HepG2 (cell line): ENCODE measurements at regions of chr9 and their contacts with region 1.

Region 1: DNA sequence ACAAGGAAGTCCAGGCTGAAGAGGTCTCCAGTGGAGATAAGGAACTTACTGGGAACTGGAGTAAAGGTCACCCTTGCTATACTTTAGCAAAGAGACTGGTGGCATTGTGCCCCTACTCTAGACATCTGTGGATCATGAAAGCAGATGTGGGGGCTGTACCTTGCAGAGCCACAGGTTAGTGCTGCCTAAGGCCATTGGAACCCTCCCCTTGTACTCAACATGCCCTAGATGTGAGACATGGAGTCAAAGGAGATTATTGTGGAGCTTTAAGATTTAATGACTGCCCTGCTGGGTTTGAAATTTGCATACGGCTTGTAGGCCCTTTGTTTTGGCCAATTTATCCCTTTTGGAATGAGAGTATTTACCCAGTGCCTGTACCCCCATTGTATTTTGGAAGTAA is 397.3 kb upstream of the GRIN3A start:
- DNase-seq: no peak
- ATAC-seq: no peak
- H3K4me3 ChIP-seq: no peak overlapping the region
- H3K27ac ChIP-seq: no peak overlapping the region
- H3K4me1 ChIP-seq: no peaks in the 10 kb centered on the region
- H3K27me3 ChIP-seq: no peaks in the 10 kb centered on the region
- CTCF ChIP-seq: no peak
- EP300 ChIP-seq: no peak
- POLR2A ChIP-seq: no peak
- RAD21 ChIP-seq: no peak

Region 2: GRCh38 chr9:102087141-102087540 is 48.6 kb before region 1 on chr9:
- CTCF ChIA-PET with region 1: no interaction called
- POLR2A ChIA-PET with region 1: no interaction called
- in situ Hi-C with region 1: no loop called
- intact Hi-C with region 1: no loop called
- DNase-seq: no peak
- ATAC-seq: no peak
- H3K4me3 ChIP-seq: no peak overlapping the region
- H3K27ac ChIP-seq: no peak overlapping the region
- H3K4me1 ChIP-seq: no peaks in the 10 kb centered on the region
- H3K27me3 ChIP-seq: no peaks in the 10 kb centered on the region
- CTCF ChIP-seq: no peak
- EP300 ChIP-seq: no peak
- POLR2A ChIP-seq: no peak
- RAD21 ChIP-seq: no peak

Region 3: GRCh38 chr9:102113191-102113590 is 22.6 kb before region 1 on chr9:
- CTCF ChIA-PET with region 1: no interaction called
- POLR2A ChIA-PET with region 1: no interaction called
- in situ Hi-C with region 1: no loop called
- intact Hi-C with region 1: no loop called
- DNase-seq: no peak
- ATAC-seq: no peak
- H3K4me3 ChIP-seq: no peak overlapping the region
- H3K27ac ChIP-seq: no peak overlapping the region
- H3K4me1 ChIP-seq: no peaks in the 10 kb centered on the region
- H3K27me3 ChIP-seq: no peaks in the 10 kb centered on the region
- CTCF ChIP-seq: no peak
- EP300 ChIP-seq: no peak
- POLR2A ChIP-seq: no peak
- RAD21 ChIP-seq: no peak

Region 4: GRCh38 chr9:102164247-102164646 is 28.5 kb after region 1 on chr9:
- CTCF ChIA-PET with region 1: no interaction called
- POLR2A ChIA-PET with region 1: no interaction called
- in situ Hi-C with region 1: no loop called
- intact Hi-C with region 1: loop called (anchors 2 kb)
- DNase-seq: no peak
- ATAC-seq: no peak
- H3K4me3 ChIP-seq: no peak overlapping the region
- H3K27ac ChIP-seq: no peak overlapping the region
- H3K4me1 ChIP-seq: no peaks in the 10 kb centered on the region
- H3K27me3 ChIP-seq: no peaks in the 10 kb centered on the region
- CTCF ChIP-seq: no peak
- EP300 ChIP-seq: no peak
- POLR2A ChIP-seq: no peak
- RAD21 ChIP-seq: no peak